Heart left ventricle (tissue), 16 donors: ENCODE measurements at regions of chr12 and their contacts with region 1.

Region 1: GRCh38 chr12:13534645-13535398 is 338.3 kb downstream of the EMP1 start:
- DNase-seq: peak; percentile 39 to 73 (median 51)
- ATAC-seq: peak in 3 of 4 donors; percentile 53 to 61 (median 55)
- H3K4me3 ChIP-seq: peak overlapping the region in 8 of 12 donors; percentile 25 to 55 (median 30)
- H3K27ac ChIP-seq: peak overlapping the region in 2 of 12 donors; percentile 10 to 18
- H3K4me1 ChIP-seq: no peaks in the 10 kb centered on the region
- H3K27me3 ChIP-seq: peaks cover 0 to 3% (median 0%) of the 10 kb centered on the region in 9 donors
- CTCF ChIP-seq: peak; percentile 74 to 95 (median 84)
- POLR2A ChIP-seq: no peak

Region 2: DNA sequence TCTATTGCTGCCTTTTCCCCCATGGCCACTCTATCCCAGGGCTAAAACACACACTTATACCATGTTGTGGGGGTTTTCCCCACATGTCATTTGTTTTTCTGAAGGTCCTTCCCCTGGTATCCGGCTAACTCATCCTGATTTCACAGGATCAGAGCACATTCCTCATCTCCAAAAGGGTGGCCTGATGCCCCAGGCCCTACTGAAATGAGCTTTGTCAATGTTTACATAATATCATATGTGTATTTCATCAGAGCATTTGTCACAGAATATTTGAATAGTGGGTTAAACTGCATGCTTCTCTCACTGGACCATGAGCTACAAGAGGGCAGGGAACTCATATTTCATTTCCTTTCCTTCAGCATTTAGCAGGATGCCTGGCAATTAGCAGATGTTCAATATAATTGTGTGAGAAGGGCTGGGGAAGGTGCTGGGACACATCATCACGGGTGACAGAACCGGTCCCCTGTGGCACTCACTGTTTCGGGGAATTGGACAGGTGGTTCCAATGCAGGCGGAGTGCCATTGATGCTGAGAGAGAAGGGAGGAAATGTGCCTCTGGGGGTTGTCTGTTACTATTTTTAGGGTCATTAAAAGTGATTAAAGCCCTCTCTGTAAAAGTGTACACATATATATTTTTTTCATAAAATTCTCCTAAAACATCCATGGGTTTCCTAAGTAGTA is 311.5 kb before region 1 on chr12:
- intact Hi-C with region 1: no loop called
- DNase-seq: no peak
- ATAC-seq: no peak
- H3K4me3 ChIP-seq: no peak overlapping the region
- H3K27ac ChIP-seq: no peak overlapping the region
- H3K4me1 ChIP-seq: peaks cover 0 to 5% (median 0%) of the 10 kb centered on the region in 12 donors
- H3K27me3 ChIP-seq: no peaks in the 10 kb centered on the region
- CTCF ChIP-seq: no peak
- POLR2A ChIP-seq: no peak

Region 3: DNA sequence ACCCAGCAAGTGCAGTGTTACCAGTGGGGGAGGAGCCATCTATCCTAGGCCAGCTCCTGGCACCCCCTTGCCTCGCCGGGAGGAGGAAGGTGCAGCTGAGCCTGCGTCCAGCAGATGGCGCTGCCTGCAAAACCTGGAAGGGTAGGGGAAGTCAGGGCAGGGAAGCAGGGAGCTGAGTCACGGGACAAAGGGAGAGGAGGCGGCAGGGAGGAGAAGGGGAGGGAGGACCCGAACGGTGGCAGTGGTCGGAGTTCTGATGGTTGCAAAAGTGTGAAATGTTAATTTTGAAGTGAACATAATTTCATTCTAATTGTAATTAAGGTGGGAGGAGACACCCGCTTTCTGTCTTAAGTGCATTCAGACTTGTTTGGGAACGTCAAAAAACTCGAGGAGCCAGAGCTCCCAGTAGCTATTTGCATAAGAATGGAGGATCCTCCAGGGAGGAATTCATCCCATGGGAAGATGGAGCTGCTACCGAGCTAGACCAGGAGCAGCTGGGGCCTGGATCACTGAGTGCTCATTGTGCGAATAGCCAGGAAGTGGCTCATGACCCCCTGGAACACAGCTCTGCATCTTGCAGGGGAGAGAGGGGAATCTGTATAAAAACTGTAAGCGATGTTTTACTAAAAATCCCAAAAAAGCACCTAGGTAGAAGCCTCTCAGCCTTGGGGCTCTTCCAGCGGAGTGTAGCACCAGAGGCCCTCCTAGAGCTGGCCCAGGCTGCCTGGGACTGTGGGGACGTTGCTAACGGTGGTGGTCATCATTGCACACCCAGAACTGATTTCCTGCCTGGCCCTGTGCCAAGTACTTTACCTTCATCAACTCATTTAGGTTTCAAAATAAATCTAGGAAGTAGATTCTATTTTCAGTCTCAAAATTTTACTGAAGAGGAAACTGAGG is 278.8 kb before region 1 on chr12:
- intact Hi-C with region 1: loop called in 1 of 10 experiments (anchors 5 kb)
- DNase-seq: peak; percentile 91 to 95 (median 94)
- ATAC-seq: peak; percentile 97 to 99 (median 99)
- H3K4me3 ChIP-seq: peak overlapping the region in 10 of 12 donors; percentile 17 to 56 (median 42)
- H3K27ac ChIP-seq: peak overlapping the region in 1 of 12 donors; percentile 22
- H3K4me1 ChIP-seq: peaks cover 0 to 25% (median 9%) of the 10 kb centered on the region in 12 donors
- H3K27me3 ChIP-seq: no peaks in the 10 kb centered on the region
- CTCF ChIP-seq: peak; percentile 92 to 99 (median 95)
- POLR2A ChIP-seq: peak in 1 of 2 donors; percentile 14

Region 4: GRCh38 chr12:13278249-13278787 is 256.5 kb before region 1 on chr12:
- intact Hi-C with region 1: loop called in 9 of 10 experiments (anchors 2 to 10 kb)
- DNase-seq: peak; percentile 57 to 87 (median 71)
- ATAC-seq: peak; percentile 91 to 98 (median 93)
- H3K4me3 ChIP-seq: peak overlapping the region in 2 of 12 donors; percentile 6 to 22
- H3K27ac ChIP-seq: no peak overlapping the region
- H3K4me1 ChIP-seq: peaks cover 0 to 10% (median 5%) of the 10 kb centered on the region in 12 donors
- H3K27me3 ChIP-seq: peaks cover 0 to 33% (median 0%) of the 10 kb centered on the region in 9 donors
- CTCF ChIP-seq: peak; percentile 97 to 99 (median 98)
- POLR2A ChIP-seq: no peak

Region 5: DNA sequence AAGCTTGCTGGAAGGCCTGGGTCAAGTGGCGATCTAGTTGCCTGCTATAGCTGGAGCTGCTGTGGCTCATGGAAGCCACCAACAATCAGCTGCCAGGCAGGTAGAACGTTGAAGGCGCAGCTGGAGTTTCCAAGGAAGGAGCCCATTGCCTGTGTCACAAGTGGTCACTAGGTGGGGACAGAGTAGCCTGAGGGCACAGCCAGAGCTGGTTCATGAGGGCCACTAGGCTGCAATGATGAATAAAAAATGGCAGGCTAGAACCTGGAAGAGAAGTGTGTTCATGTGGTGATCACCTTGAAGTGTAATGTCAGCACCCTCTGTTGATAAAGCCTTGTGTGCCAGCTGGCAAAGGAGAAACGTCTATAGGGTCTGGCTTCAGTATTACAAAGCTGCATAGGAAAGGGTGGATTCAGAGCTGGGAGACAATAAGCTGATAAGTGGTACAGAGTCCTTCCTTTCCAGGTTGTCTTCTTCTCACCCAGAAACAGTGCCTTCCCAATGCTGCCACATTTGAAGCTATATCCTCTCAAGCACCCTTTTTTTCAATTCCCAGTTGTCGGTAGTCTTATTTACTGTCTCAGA is 172.5 kb before region 1 on chr12:
- intact Hi-C with region 1: loop called (anchors 2 to 10 kb)
- DNase-seq: peak; percentile 35 to 69 (median 49)
- ATAC-seq: peak in 3 of 4 donors; percentile 78 to 87 (median 80)
- H3K4me3 ChIP-seq: no peak overlapping the region
- H3K27ac ChIP-seq: no peak overlapping the region
- H3K4me1 ChIP-seq: no peaks in the 10 kb centered on the region
- H3K27me3 ChIP-seq: peaks cover 0 to 14% (median 4%) of the 10 kb centered on the region in 9 donors
- CTCF ChIP-seq: peak; percentile 59 to 80 (median 76)
- POLR2A ChIP-seq: no peak

Region 6: GRCh38 chr12:13367973-13368372 is 166.8 kb before region 1 on chr12:
- intact Hi-C with region 1: loop called (anchors 2 to 10 kb)
- DNase-seq: peak in 2 of 5 donors; percentile 28 to 33
- ATAC-seq: peak in 3 of 4 donors; percentile 25 to 38 (median 26)
- H3K4me3 ChIP-seq: no peak overlapping the region
- H3K27ac ChIP-seq: no peak overlapping the region
- H3K4me1 ChIP-seq: no peaks in the 10 kb centered on the region
- H3K27me3 ChIP-seq: peaks cover 0 to 4% (median 0%) of the 10 kb centered on the region in 9 donors
- CTCF ChIP-seq: no peak
- POLR2A ChIP-seq: no peak